Astrocyte of the cerebellum (primary cell): ENCODE measurements at regions of chr6 and their contacts with region 1.

Region 1: DNA sequence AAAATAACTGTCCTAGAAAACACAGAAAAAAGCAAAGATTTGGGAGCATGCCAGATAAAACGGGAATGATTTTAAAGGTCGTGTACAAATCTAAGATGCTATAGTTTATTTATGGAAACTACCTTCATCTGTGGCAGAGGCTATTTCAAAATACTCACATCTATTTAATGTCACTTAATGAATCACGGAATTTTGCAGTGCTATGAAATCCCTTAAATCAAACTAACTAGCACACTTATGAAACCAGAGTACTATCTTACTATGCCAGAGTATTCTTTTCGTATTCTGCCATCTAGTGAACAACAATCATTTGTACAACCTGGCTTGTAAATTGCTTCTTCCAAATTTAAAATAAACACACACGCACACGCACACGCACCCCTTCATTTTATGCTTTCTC is 77.9 kb upstream of the BMP5 start:
- DNase-seq: no peak
- H3K4me3 ChIP-seq: no peak overlapping the region
- CTCF ChIP-seq: no peak

Region 2: DNA sequence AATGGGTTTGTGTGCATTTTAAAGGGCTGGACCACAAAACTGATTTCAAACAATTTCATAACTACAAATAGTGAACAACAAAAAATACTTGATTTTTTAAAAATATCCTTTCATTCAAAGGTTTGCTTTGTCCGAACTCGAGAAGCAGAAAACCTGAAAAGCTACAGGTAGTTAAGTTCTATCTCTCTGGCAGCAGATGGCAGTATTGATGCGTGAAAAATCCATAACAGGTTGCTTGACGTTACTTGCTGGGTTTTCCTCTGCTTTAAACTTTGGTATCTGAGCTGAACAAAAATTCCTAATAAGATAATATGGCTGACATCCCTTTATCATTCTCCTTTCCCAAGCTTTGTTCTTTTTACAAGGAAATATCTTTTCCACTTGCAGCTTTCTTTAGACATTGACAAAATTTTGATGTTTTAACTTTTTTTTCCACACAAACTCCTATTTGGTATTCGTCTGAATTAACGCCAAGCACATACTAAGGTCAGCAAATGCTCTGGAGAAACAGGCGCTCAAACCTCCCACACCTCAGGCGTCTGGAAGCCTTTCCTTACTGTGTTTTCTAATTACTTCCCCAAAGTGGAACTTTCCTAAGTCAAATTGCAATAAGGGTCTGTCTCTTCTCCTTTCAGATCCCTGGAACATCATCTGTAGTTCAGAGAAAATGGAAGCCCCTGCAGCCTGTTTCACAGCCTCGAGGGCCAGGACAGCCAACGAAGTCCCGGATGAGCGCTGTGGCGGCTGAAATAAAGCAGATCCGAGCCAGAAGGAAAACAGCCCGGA is 676.4 kb before region 1 on chr6:
- in situ Hi-C with region 1: loop called (anchors 25 kb)
- DNase-seq: peak; percentile 76
- H3K4me3 ChIP-seq: no peak overlapping the region
- CTCF ChIP-seq: peak; percentile 65

Region 3: DNA sequence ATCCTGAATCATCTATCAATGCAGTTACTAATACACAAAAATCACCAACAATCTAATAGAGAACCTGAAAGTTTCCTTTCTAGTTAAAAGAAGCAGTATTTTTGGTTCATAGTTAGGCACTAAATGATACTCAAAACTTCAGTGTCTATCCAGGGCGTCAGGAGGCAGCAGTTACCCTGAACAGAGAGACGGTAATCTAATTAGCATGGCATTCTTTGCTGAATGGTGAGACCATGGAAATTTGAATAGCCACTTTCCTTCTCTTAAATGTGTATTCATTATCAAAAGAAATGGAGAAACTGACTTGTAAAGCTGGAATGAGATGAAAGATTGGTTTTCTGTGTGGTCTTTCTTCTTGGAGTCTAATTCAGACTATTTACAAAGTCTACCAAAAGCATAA is 68.6 kb after region 1 on chr6:
- in situ Hi-C with region 1: no loop called
- DNase-seq: peak; percentile 11
- H3K4me3 ChIP-seq: no peak overlapping the region
- CTCF ChIP-seq: peak; percentile 48